ENCODE measurements at regions of chr20 and their contacts with region 1.

Region 1: DNA sequence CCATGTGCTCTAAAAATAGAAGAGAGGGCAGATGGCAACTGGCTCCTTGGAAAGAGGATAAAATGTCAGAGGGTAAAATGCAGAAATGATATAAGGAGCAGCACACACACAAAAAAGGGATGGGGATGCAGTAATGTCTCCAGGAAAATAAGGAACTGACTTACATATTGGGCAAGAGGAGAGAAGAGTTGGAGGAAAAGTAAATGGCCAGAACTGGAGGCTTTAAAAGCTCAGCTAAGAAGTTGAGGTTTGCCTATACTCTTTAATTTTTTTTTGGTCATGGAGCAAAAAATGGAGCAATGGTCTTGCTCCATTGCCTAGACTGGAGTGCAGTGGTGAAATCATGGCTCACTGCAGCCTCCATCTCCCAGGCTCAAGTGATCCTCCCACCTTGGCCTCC is 93.7 kb downstream of the SULF2 start:
- DNase-seq: no peak
- H3K4me3 Mint-ChIP-seq: no peak overlapping the region
- H3K27ac Mint-ChIP-seq: no peak overlapping the region
- H3K4me1 Mint-ChIP-seq: peaks cover 6% of the 10 kb centered on the region
- H3K27me3 Mint-ChIP-seq: peaks cover 5% of the 10 kb centered on the region

Region 2: GRCh38 chr20:47677635-47678453 is 13.8 kb before region 1 on chr20:
- CTCF ChIA-PET with region 1: interaction called, 15 read pairs
- POLR2A ChIA-PET with region 1: no interaction called
- DNase-seq: peak; percentile 59
- H3K4me3 Mint-ChIP-seq: no peak overlapping the region
- H3K27ac Mint-ChIP-seq: peak overlapping the region; percentile 60
- H3K4me1 Mint-ChIP-seq: no peaks in the 10 kb centered on the region
- H3K27me3 Mint-ChIP-seq: no peaks in the 10 kb centered on the region

Region 3: GRCh38 chr20:47705494-47705856 is 13.8 kb after region 1 on chr20:
- CTCF ChIA-PET with region 1: no interaction called
- POLR2A ChIA-PET with region 1: no interaction called
- DNase-seq: no peak
- H3K4me3 Mint-ChIP-seq: no peak overlapping the region
- H3K27ac Mint-ChIP-seq: no peak overlapping the region
- H3K4me1 Mint-ChIP-seq: no peaks in the 10 kb centered on the region
- H3K27me3 Mint-ChIP-seq: no peaks in the 10 kb centered on the region

Region 4: DNA sequence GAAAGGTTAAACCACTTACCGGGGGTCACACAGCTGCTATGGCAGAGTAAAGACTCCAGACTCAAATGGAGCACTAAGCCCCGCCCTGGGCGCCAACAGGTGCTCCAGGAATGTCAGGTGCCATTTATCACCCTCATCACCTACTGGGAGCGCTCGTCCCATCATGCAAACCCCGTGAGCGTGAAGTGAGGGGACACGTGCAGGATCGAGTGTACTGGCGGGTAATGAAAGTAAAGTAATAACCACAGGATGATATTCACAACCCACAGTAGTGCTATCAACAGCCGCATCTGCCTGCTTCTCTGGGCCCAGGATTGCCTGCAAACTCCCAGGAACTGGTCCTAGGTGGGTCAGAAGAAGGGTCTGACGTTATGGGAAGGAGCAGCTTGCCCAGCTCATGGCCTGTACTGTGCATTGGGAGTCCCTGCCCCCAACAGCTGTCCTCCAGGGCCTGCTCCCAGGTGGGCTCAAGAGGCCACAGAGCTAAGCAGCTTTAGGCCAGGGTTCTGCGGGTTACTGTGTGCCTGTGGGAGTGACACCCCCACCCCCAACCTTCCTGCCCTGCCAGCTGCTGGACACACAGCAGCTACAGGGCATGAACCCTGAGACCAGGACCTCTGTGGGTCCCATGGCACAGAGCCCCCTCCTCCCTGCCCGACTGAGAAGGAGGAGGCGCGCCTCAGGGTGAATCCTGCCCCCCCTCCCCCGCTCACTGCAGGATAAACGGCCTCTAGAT is 214.2 kb after region 1 on chr20:
- CTCF ChIA-PET with region 1: no interaction called
- POLR2A ChIA-PET with region 1: no interaction called
- DNase-seq: no peak
- H3K4me3 Mint-ChIP-seq: no peak overlapping the region
- H3K27ac Mint-ChIP-seq: no peak overlapping the region
- H3K4me1 Mint-ChIP-seq: no peaks in the 10 kb centered on the region
- H3K27me3 Mint-ChIP-seq: no peaks in the 10 kb centered on the region

Region 5: DNA sequence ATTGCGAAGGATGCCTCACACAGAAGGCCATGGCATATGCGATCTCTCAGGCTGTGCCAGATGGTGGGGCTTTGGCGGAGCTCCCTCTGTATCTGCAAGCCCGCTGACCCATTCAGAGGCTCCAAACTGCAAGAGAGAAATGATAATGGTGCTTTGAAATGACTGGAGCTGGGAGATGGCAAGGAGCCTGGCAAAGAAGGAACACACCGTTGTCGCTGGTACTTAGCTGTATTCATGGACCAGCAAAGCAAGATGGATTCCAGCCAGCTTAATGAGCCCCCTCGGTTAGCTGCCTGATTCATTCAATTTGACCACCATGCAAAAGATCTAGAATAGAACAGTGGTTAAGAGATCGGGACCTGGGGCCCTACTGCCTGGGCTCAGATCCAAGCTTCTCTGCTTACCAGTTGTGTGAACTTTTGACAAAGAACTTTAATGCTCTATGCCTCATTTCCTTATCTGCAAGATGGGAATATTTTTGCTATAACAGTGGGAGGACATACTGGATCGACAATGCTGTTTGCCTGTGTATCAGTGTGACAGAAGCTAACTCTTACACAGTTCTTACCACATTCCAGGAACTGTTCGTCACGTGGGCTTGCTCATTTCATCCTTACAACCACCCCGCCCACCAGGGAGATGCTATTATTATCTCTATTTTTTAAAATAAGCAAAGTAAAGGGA is 411.4 kb after region 1 on chr20:
- CTCF ChIA-PET with region 1: no interaction called
- POLR2A ChIA-PET with region 1: no interaction called
- DNase-seq: no peak
- H3K4me3 Mint-ChIP-seq: no peak overlapping the region
- H3K27ac Mint-ChIP-seq: no peak overlapping the region
- H3K4me1 Mint-ChIP-seq: no peaks in the 10 kb centered on the region
- H3K27me3 Mint-ChIP-seq: no peaks in the 10 kb centered on the region